ENCODE measurements at regions of chr3 and their contacts with region 1.

Region 1: DNA sequence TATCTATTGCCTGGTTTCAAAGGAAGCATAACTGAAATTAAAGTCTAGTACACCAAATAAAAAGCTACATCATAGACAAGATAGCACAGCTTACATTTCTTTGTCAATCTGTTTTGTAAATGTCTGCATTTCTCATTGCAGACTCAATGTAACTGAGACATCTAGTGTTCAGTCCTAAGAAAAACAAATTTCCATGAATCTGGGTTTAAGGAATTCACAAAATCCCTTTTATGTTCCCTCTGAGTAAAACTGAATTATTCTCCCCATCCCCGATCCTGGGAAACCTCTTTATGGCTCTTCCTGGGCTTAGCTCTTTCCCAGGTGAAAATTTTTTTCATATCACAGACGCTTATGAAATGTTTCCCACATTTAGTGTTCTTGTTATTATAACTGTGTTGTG is 21.6 kb upstream of the RASA2 start:
- DNase-seq: peak; percentile 24
- H3K4me3 ChIP-seq: no peak overlapping the region
- H3K27ac ChIP-seq: no peak overlapping the region
- H3K4me1 ChIP-seq: no peaks in the 10 kb centered on the region
- H3K27me3 ChIP-seq: no peaks in the 10 kb centered on the region
- CTCF ChIP-seq: peak; percentile 44
- EP300 ChIP-seq: no peak
- RAD21 ChIP-seq: peak; percentile 65

Region 2: DNA sequence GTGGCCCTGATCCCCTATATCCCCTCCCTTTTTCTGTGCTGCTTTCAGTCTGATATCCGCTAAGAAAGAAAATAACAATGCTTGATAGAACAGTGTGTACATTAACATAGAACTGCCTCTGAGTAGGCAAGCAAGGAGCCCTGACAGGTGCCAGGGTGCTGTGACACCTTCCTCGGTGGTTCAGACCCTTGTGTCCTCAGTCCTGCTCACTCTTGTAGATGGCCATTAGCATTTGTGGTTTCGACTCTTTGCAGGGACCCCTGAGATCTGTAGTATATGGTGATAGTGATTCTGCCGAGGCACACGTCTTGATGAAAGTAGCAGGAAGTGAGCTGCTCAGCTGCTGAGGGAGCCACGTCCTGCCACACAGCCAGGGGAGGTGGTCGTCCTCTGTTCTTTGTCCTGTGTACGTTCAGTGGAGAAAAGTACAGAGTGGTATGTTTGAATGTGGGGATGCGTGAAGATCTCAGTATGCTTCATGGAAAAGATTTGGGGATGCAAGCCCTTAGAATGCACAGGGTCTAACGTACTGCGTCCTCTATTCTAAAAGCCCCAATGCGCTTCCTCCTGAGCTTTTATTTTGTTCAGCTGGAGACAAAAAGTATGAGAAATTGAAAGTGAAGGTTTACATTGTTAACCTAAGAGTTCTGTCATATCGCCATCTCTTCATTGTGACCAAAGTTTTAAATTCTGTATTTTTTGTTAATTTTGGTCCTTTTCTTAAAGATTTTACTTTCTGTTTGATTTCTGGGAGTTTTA is 198.2 kb before region 1 on chr3:
- CTCF ChIA-PET with region 1: no interaction called
- POLR2A ChIA-PET with region 1: no interaction called
- DNase-seq: no peak
- H3K4me3 ChIP-seq: no peak overlapping the region
- H3K27ac ChIP-seq: no peak overlapping the region
- H3K4me1 ChIP-seq: peaks cover 0 to 7% of the 10 kb centered on the region in 2 experiments; a peak in 1 of 4 replicates
- H3K27me3 ChIP-seq: no peaks in the 10 kb centered on the region
- CTCF ChIP-seq: no peak
- EP300 ChIP-seq: no peak
- RAD21 ChIP-seq: no peak

Region 3: DNA sequence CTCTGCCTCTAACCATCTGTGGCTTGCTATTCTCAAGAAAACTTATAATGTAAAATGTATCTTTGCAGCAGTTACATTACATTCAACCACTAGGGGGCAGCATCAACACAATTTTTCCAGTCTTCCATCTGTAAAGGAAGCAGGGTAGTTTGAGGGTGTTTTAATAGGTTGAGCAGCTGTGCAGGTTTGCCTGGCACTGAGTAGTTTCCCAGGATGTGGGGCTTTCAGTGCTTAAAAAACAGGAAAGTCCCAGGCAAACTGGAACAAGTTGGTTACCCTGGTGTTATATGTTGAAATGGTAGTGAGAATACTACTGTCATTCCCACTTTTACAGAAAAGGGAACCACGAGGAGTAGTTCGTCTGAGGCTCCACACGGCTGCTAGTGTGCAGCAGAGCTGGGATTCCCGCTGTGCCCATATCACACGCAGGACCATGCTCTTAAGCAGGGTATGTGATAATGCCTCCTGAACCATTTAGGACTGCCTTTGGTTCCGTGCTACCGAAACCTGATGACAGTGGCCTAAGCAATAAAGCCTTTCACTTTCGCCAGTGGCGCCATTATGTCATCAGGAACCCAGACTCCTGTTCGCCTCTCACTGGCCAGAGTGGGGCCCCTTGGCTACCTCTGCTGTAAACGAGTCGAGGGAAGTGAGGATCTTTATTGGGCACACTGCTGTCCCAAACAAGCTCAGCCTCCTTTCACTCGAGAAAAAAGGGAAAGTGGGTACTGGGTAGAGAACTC is 161.6 kb before region 1 on chr3:
- CTCF ChIA-PET with region 1: interaction called, 29 read pairs
- POLR2A ChIA-PET with region 1: no interaction called
- DNase-seq: peak; percentile 66
- H3K4me3 ChIP-seq: no peak overlapping the region; a peak in 1 of 4 replicates
- H3K27ac ChIP-seq: no peak overlapping the region
- H3K4me1 ChIP-seq: no peaks in the 10 kb centered on the region; a peak in 1 of 4 replicates
- H3K27me3 ChIP-seq: no peaks in the 10 kb centered on the region
- CTCF ChIP-seq: peak; percentile 89
- EP300 ChIP-seq: no peak
- RAD21 ChIP-seq: peak; percentile 75

Measured in SK-N-SH (cell line).